ENCODE measurements at regions of chr17 and their contacts with region 1.

Region 1: GRCh38 chr17:44864866-44865660 is 17.4 kb downstream of the HIGD1B start:
- DNase-seq: peak; percentile 78
- ATAC-seq: peak; percentile 80

Region 2: DNA sequence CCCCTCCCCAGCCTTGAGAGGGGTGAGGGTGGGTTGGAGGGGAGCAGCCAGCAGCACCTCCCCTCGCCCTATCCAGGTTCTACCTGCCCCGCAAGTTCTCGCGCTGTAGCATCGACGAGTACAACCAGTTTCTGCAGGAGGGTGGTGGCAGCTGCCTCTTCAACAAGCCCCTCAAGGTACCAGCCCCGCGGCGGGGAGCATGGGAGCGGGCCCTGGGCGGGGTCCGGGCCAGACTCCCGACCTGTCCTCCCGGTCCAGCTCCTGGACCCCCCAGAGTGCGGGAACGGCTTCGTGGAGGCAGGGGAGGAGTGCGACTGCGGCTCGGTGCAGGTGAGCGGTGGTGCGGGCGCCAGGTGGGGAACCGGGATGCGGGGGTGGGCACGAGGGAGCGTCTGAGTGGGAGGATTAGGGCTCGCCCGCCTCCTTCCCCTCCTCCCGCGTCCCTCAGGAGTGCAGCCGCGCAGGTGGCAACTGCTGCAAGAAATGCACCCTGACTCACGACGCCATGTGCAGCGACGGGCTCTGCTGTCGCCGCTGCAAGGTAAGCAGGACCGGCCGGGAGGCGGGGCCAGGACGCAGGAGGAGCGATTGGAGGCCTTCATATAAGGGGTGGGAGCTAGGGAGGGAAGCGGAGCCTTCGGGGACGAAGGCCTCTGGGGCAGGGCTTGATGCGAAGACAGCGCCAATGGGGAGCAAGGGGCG is 89.8 kb before region 1 on chr17:
- intact Hi-C with region 1: loop called (anchors 1 kb)
- DNase-seq: no peak
- ATAC-seq: peak; percentile 95

Region 3: DNA sequence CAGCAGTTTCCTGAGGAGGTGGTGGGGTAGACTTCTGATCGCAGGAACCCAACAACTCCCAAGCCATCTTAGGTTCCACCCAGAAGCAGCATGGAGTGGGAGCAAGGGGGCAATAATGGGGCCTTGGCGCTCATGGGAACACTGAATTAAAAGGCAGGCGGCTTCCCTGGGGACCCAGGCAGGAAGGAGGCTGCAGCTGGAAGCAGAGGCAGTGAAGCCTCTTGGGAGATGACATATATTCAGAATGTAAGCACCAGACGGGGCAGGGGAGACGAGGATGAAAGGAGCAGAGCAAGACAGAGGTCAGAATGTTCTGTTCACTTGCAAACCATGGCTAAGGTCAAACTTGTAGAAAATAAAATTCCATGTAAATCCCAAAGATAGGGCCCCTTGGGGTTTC is 14.5 kb before region 1 on chr17:
- intact Hi-C with region 1: loop called (anchors 1 kb)
- DNase-seq: no peak
- ATAC-seq: no peak